IMR-90 (cell line): ENCODE measurements at regions of chr1 and their contacts with region 1.

Region 1: GRCh38 chr1:232553050-232553754 is 76.7 kb downstream of the SIPA1L2 start:
- DNase-seq: peak; percentile 52
- ATAC-seq: peak; percentile 10
- H3K4me3 ChIP-seq: no peak overlapping the region
- H3K27ac ChIP-seq: peak overlapping the region; percentile 36
- H3K4me1 ChIP-seq: peaks cover 16% of the 10 kb centered on the region
- H3K27me3 ChIP-seq: no peaks in the 10 kb centered on the region
- CTCF ChIP-seq: no peak
- POLR2A ChIP-seq: no peak
- RAD21 ChIP-seq: no peak

Region 2: DNA sequence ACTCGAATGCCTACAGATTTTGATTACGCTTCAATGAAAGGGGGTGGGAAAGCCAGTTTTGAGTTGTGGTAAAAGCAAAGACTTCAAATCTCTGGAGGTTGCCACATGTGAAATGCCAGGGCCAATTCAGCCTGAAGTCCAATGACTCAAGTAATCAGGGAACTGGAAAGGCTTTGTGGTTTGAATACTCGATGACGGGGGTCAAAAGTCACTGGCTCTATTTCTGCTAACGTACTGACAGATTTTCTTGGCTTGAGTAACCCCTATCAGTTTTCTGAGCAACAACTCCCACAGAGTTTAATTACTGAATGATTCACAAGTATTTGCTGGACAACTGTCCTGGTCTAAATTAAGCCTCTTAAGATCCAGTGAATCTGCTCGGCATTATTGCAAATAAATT is 75.5 kb before region 1 on chr1:
- CTCF ChIA-PET with region 1: no interaction called
- POLR2A ChIA-PET with region 1: no interaction called
- dilution Hi-C with region 1: no loop called
- in situ Hi-C with region 1: no loop called
- intact Hi-C with region 1: loop called (anchors 5 kb)
- DNase-seq: peak; percentile 98
- ATAC-seq: peak; percentile 79
- H3K4me3 ChIP-seq: no peak overlapping the region
- H3K27ac ChIP-seq: no peak overlapping the region
- H3K4me1 ChIP-seq: peaks cover 14% of the 10 kb centered on the region
- H3K27me3 ChIP-seq: no peaks in the 10 kb centered on the region
- CTCF ChIP-seq: no peak
- POLR2A ChIP-seq: no peak
- RAD21 ChIP-seq: no peak

Region 3: GRCh38 chr1:232574889-232575762 is 21.9 kb after region 1 on chr1:
- CTCF ChIA-PET with region 1: no interaction called
- POLR2A ChIA-PET with region 1: no interaction called
- dilution Hi-C with region 1: no loop called
- in situ Hi-C with region 1: no loop called
- intact Hi-C with region 1: loop called (anchors 2 kb)
- DNase-seq: peak; percentile 68
- ATAC-seq: peak; percentile 76
- H3K4me3 ChIP-seq: peak overlapping the region; percentile 32; the same call in 1 of the 2 replicates
- H3K27ac ChIP-seq: peak overlapping the region; percentile 18; the same call in 1 of the 2 replicates
- H3K4me1 ChIP-seq: peaks cover 2% of the 10 kb centered on the region; the same call in 1 of the 2 replicates
- H3K27me3 ChIP-seq: no peaks in the 10 kb centered on the region
- CTCF ChIP-seq: no peak
- POLR2A ChIP-seq: no peak
- RAD21 ChIP-seq: no peak